ENCODE measurements at regions of chr1 and their contacts with region 1.

Region 1: DNA sequence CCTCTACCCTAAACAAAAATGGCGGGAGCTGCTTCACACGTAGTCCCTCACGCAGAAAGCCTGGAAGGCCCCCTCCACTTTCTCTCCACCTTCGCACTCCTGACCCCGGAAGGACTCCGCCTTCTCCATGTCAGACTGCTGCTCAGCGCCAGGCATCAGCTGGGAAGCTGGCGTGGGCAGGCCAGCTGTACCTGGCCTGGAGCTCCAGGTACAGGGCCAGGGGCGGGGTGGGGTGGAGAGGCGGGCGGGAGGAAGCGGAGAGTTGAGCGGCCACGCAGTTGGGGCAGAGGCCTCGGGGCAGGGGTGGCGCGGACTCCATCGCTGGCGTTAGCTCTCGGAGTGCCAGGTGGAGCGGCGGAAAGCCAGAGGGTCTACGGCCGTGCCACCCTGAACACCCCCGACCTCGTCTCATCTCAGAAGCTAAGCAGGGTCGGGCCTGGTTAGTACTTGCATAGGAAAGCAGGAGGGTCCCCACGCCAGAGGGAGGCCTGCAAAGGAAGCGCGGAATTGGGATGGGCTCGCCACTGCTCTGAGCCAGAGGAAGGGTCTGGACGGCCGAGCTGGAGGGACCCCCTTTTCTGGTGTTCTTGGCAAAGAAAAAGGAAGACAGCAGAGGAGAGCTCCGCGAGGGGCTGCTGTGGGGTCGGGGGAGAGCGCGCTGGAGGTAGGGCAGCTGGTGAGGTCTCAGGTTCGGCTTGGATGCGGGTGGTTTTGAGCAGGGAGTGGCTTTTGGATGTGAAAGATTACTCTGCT is at the start of gene MIGA1:
- DNase-seq: peak; percentile 88 to 92
- H3K4me3 ChIP-seq: peak within 1 kb of the TSS; percentile 83
- H3K4me3 Mint-ChIP-seq: peak within 1 kb of the TSS; percentile 99
- H3K27ac Mint-ChIP-seq: peak within 1 kb of the TSS; percentile 93
- H3K4me1 ChIP-seq: peaks cover 16% of the 10 kb centered on the region
- H3K4me1 Mint-ChIP-seq: peaks cover 20% of the 10 kb centered on the region
- H3K27me3 ChIP-seq: no peaks in the 10 kb centered on the region
- H3K27me3 Mint-ChIP-seq: no peaks in the 10 kb centered on the region
- CTCF ChIP-seq: no peak
- total RNA-seq, gene MIGA1: 12.0 and 12.1 TPM in 2 replicates

Region 2: DNA sequence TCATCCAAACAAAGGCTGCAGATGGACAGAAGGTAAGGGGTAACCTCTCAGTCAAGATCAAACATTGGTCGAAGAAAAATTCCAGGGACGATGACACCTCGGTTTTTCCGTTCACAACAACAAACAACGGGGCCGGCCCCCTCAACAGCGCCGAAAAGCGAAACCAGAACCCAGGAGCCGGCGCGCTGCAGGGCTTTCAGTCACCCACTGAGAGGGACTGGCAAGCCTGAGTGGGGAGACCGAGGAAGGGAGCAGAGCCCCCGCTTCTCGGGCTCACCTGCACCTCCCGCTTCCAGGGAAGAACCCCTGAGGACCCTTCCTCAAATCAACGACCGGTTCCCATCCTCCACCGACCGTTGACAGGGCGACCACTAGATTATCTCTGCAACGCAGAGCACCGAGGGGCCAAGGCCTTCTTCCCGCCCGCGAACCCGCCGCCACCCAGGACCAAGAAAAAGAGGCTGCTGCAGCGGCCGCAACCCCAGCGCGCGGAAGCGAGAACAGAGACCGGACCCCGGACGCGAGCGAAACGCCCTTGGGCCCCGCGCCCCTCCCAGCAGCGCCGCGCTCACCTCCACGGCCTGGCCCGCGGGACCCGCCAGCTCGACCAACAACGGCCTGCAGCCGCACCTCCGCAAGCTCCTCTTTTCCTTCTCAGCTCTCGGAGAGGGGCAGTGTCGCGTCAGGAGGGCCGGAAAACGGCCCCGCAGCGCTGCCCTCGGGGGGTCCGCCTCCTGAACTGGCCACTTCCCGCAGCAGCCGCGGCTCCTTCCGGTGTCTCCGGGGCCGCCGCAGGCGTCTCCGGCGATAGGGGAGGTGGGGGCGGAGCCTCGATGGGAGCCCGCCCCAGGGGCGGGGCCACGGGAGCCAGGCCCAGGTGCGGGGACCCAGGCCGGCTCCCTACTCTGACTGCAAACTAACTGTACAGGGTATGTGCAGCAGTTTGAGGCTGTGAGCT is 20.4 kb before region 1 on chr1 and contains the start of gene USP33:
- CTCF ChIA-PET with region 1: no interaction called
- POLR2A ChIA-PET with region 1: interaction called, 5 read pairs
- intact Hi-C with region 1: loop called (anchors 1 kb)
- DNase-seq: peak; percentile 84 to 92
- H3K4me3 ChIP-seq: peak within 1 kb of the TSS; percentile 63
- H3K4me3 Mint-ChIP-seq: peak within 1 kb of the TSS; percentile 86
- H3K27ac Mint-ChIP-seq: peak within 1 kb of the TSS; percentile 92
- H3K4me1 ChIP-seq: peaks cover 7% of the 10 kb centered on the region; the same call in 1 of the 2 replicates
- H3K4me1 Mint-ChIP-seq: peaks cover 19% of the 10 kb centered on the region
- H3K27me3 ChIP-seq: no peaks in the 10 kb centered on the region
- H3K27me3 Mint-ChIP-seq: no peaks in the 10 kb centered on the region
- CTCF ChIP-seq: no peak
- total RNA-seq, gene USP33: 36.1 and 40.6 TPM in 2 replicates